Activated CD8-positive, alpha-beta T cell treated with anti-CD3 and anti-CD28 coated beads for 36 hours (primary cell): ENCODE measurements at regions of chr19 and their contacts with region 1.

Region 1: DNA sequence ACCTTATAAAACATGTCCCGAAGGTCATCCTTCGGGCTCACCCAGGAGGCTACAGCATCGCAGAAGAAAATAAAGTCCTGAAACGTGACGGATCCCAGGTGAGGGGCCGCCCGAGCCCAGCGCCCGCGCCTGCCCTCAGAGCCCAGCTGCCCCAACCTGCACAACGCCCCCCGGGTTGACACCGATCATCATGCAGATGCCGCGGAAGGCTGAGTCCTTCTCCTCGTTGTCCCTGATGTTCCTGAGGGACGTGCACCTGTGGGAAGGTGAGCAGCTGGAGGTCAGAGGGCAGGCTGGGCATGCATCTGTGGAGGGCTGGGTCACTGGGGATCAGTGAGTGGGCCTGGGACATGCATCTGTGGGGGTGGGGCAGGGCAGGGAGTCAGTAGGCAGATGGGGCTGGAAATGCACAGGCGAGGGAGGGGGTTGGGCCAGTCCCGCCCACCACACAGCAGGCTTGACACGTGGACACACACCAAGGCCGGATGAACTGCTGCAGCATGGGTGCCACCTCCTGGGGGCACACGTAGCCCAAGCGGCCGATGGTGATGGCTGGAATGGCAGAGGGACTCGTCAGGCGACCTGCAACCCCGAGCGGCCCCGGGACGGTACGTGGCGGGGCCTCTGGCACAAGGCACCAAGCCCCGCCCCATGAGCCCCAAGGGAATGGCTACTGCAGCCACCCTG is 5.3 kb upstream of the FBXW9 start:
- DNase-seq: no peak
- ATAC-seq: no peak
- H3K4me3 Mint-ChIP-seq: no peak overlapping the region
- H3K27ac Mint-ChIP-seq: no peak overlapping the region
- H3K4me1 Mint-ChIP-seq: peaks cover 7% of the 10 kb centered on the region
- H3K27me3 Mint-ChIP-seq: no peaks in the 10 kb centered on the region
- CTCF ChIP-seq: no peak

Region 2: DNA sequence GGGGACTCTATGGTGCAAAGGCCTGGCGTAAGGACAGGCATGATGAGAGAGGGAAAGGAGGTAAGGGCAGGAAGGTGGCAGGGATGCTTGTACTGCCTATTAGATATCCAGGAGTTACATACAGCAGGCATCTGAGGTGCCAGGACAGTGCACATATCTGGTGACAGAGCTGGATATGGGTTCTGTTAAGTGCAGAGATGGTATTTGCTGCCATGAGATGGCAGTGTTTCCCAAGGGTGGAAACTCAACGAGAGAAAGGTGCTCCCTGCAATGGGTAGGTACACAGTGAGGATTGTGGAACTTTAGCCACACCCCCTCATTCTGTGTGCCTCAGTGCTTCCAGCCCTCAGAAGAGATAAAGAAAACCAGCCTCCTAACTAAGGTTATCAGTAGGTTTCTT is 15.1 kb after region 1 on chr19:
- CTCF ChIA-PET with region 1: interaction called, 4 read pairs
- POLR2A ChIA-PET with region 1: interaction called, 18 read pairs
- intact Hi-C with region 1: no loop called
- DNase-seq: peak; percentile 49
- ATAC-seq: peak; percentile 67
- H3K4me3 Mint-ChIP-seq: no peak overlapping the region
- H3K27ac Mint-ChIP-seq: peak overlapping the region; percentile 20
- H3K4me1 Mint-ChIP-seq: peaks cover 23% of the 10 kb centered on the region
- H3K27me3 Mint-ChIP-seq: no peaks in the 10 kb centered on the region
- CTCF ChIP-seq: peak; percentile 28

Region 3: DNA sequence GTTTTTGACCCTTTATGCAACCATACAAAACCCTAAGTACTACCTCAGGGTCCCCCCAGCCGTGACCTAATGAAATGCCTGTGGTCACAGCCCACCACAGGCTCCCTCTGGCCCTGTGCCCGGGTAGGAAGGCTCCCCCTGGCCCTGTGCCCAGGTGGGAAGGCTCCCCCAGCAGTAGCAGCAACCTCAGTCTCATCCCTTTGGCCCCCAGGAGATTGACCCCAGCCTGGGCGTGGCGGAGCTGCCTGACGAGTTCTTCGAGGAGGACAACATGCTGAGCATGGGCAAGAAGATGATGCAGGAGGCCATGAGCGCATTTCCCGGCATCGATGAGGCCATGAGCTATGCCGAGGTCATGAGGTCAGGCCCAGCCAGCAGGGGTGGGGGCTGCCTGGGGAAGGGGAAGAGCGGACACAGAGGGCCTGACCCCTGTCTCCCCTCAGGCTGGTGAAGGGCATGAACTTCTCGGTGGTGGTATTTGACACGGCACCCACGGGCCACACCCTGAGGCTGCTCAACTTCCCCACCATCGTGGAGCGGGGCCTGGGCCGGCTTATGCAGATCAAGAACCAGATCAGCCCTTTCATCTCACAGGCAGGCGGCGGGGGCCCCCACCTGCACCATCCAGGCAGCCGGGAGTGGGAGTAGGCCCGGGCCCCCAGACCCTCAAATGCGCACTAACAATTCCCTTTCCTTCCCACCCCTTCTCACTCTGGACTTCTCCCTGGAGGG is 43.6 kb after region 1 on chr19:
- CTCF ChIA-PET with region 1: no interaction called
- POLR2A ChIA-PET with region 1: no interaction called
- intact Hi-C with region 1: no loop called
- DNase-seq: no peak
- ATAC-seq: no peak
- H3K4me3 Mint-ChIP-seq: no peak overlapping the region
- H3K27ac Mint-ChIP-seq: no peak overlapping the region
- H3K4me1 Mint-ChIP-seq: no peaks in the 10 kb centered on the region
- H3K27me3 Mint-ChIP-seq: peaks cover 4% of the 10 kb centered on the region
- CTCF ChIP-seq: no peak